K562 (cell line): ENCODE measurements at regions of chr18 and their contacts with region 1.

Region 1: DNA sequence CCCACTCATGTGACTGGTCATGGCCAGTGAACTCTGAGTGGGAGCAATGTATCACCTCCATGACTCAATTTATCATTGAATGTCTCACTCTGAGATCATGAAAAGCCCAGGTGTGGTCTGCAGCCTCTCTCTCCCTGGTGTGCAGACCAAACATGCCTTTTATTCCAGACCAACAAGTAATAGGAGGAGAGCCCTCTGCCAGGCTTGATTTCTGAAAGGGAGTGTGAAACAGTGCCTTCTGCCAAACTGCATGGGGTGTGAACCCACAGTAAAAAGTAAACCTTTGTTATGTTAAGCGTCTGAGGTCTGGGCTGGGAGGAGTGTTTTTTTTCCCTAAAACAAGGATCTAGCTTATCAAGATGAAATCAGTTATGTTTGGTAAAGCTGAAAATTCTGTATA is 601.2 kb downstream of the ADCYAP1 start:
- DNase-seq: no peak
- ATAC-seq: no peak
- H3K4me3 ChIP-seq: no peak overlapping the region
- H3K27ac ChIP-seq: no peak overlapping the region
- H3K4me1 ChIP-seq: peaks cover 3 to 6% of the 10 kb centered on the region in 2 experiments; a peak in 3 of 5 replicates
- H3K27me3 ChIP-seq: no peaks in the 10 kb centered on the region
- CTCF ChIP-seq: no peak
- EP300 ChIP-seq: no peak
- POLR2A ChIP-seq: no peak
- RAD21 ChIP-seq: no peak

Region 2: GRCh38 chr18:1408376-1408775 is 97.5 kb before region 1 on chr18:
- CTCF ChIA-PET with region 1: no interaction called
- POLR2A ChIA-PET with region 1: interaction called, 3 read pairs
- in situ Hi-C with region 1: no loop called
- intact Hi-C with region 1: loop called (anchors 5 kb)
- DNase-seq: peak in 1 of 4 experiments; percentile 18
- ATAC-seq: no peak
- H3K4me3 ChIP-seq: no peak overlapping the region
- H3K27ac ChIP-seq: no peak overlapping the region
- H3K4me1 ChIP-seq: peaks cover 0 to 4% of the 10 kb centered on the region in 2 experiments; a peak in 1 of 5 replicates
- H3K27me3 ChIP-seq: no peaks in the 10 kb centered on the region; a peak in 1 of 5 replicates
- CTCF ChIP-seq: no peak
- EP300 ChIP-seq: no peak
- POLR2A ChIP-seq: no peak
- RAD21 ChIP-seq: no peak

Region 3: DNA sequence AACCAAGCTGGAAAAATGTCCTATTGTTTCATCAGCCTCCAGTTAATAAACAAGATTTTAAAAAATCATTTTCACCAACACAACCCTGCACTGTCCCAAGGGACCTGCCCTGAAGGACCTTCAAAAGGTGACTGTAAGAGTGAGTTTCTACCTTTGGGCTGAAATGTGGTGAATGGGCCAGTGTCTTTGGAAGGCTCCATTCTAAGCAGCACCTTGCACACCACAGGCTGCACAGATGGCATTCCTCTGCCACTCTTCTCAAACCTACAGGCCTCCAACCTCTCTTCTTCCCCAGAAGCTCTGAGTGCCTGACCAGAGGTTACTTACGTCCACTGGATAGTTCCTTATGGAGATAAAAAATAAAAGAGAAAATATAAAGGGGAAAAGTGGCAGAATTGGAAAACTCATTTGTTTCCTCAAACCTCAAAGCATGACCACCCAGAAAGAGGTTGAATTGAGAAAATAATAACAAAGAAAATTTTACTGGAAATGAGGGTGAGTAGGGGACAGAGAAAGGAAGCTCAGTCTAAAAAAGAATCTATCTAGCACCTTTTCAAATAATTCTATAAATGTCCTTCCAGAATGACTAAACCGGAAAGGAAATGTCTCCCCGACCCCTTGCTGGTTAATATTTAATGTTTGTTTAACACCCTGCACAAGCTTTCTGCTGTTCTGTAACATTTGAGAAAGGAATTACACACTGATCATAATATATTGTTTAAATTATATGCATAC is 889.7 kb after region 1 on chr18:
- CTCF ChIA-PET with region 1: no interaction called
- POLR2A ChIA-PET with region 1: no interaction called
- in situ Hi-C with region 1: no loop called
- intact Hi-C with region 1: no loop called
- DNase-seq: no peak
- ATAC-seq: peak; percentile 42
- H3K4me3 ChIP-seq: no peak overlapping the region
- H3K27ac ChIP-seq: no peak overlapping the region
- H3K4me1 ChIP-seq: no peaks in the 10 kb centered on the region
- H3K27me3 ChIP-seq: no peaks in the 10 kb centered on the region
- CTCF ChIP-seq: no peak
- EP300 ChIP-seq: no peak
- POLR2A ChIP-seq: no peak
- RAD21 ChIP-seq: no peak